Colonic mucosa (tissue), 4 donors: ENCODE measurements at regions of chr1 and their contacts with region 1.

Region 1: DNA sequence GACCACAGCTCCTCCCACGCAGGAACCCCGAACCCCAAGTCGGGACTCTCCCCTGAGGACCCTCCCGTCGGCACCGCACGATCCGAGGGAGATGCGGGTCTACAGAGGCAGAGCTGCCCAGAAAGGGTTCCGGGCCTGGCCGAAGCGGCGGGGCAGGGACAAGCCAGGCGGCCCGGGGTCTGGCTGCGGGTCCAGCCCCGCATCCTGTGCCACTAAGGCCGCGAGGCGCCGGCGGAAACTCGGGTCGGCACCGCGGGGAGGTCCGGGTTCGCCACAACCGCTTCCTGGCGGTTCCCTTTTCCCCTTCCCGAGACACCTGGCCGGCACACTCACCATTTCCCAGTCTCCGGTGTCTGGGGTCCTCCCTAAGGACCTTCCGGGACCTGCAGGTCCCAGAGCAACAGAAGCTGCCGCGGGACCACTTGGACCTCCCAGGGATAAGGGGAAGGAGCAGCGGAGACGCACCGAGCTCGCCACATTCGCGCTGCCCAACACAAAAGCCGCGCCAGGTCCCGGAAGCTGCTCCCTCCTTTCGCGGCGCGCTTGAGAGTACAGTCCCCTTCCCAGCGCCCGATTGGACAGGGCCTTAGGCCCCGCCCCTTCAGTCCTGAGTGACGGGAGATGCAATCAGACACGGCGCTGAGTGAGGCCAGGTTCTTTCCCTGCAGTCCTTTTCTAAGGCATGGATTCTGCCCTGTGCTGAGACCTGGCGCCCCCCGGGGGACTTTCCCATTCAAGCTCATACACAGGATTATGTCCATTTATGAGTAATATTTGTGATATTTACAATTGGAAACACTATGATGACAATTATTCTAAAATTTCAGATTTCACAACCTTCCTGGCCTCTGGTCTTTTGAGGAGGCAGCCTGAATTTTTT is at the start of gene ZNF670:
- DNase-seq: peak; percentile 99
- H3K4me3 ChIP-seq: peak within 1 kb of the TSS; percentile 70
- H3K27ac ChIP-seq: peak within 1 kb of the TSS; percentile 19
- H3K4me1 ChIP-seq: no peaks in the 10 kb centered on the region
- H3K27me3 ChIP-seq: no peaks in the 10 kb centered on the region
- CTCF ChIP-seq: no peak
- total RNA-seq, gene ZNF670: 1.7 to 2.6 TPM

Region 2: DNA sequence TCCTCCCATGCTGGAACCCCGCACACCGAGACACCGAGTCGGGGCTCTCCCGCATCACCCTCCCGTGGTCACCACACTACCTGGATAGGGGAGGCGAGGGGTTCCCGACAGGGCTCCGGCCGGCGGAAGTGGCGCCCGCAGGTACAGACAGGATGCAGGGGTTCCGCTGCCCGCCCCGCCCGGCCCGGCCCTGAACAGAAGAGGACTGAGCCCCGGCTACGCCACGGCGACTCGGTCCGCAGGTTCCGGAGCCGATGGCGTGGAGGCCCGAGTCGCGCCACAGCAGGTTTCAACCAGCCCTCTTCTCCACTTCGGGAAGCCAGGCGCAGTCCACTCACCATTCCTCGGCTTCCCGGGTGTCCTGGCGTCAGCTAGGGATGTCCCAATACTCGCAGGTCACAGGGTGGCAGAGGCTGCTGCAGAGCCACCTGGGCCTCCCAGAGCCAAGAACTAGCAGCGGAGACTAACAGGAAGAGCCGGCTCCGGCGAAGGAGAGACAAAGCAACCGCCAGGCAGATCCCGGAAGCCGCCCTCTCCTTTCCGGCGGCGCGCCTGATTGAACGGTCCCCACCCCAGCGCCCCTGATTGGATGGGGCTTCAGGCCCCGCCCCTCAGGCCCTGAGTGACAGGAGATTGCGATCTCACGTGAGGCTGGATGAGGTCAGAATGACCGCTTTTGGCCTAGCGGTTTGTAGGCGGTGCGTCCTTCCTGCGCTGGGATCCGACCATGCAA is 25.5 kb after region 1 on chr1 and contains the start of gene ZNF669:
- intact Hi-C with region 1: loop called (anchors 2 kb)
- DNase-seq: peak; percentile 98
- H3K4me3 ChIP-seq: peak within 1 kb of the TSS; percentile 90
- H3K27ac ChIP-seq: peak within 1 kb of the TSS; percentile 84
- H3K4me1 ChIP-seq: no peaks in the 10 kb centered on the region
- H3K27me3 ChIP-seq: no peaks in the 10 kb centered on the region
- CTCF ChIP-seq: no peak
- total RNA-seq, gene ZNF669: 6.2 to 6.5 TPM